ENCODE measurements at regions of chr3 and their contacts with region 1.

Region 1: DNA sequence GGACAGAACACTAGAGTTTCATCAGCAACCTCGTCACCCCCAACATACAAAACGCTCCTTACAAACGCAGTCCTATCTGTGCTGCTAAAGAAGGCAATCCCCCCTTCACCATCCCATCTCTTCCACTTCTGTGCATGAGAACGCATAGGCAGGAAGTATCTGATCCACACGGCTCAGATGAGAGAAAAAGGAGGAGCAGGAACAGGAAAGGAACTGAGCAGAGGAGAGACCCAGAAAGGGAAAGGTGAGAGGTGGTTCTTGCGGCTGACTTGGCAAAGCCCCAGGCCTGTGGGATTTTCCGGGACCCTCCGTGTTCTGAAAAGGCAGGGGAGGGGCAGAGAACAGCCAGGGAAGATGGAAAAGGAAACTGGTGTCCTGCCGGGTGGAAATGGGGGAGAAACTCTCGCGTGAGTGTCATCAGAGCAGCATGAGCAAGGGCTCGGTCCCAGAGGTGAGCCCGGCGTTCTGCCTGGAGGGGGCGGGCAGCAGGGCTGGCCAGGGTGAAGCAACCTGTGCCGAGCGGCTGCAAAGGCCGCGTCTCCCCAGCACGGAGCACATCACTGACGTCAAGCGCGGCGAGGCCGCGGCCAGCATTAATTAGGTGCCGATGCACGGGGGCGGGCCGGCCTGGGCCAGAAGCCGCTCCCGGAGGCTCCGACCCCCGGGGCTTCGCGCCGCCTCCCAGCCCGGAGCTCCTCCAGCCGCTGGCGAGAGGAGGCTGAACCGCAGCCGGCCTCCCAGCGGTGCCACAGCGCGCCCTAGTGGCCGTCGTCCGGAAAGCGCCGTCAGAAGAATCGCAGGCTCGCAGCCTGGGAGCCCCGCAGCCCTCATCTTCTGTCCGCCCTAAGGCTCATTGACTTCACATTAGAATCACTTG is 35.8 kb downstream of the CPN2 start:
- DNase-seq: peak; percentile 88
- H3K4me3 ChIP-seq: peak overlapping the region; percentile 0 to 57 (median 42)
- H3K27ac ChIP-seq: peak overlapping the region; percentile 49 to 69 (median 56)
- H3K4me1 ChIP-seq: peaks cover 4 to 28% (median 21%) of the 10 kb centered on the region in 4 donors
- H3K27me3 ChIP-seq: peaks cover 11% of the 10 kb centered on the region
- CTCF ChIP-seq: peak; percentile 93 to 98 (median 96)
- EP300 ChIP-seq: no peak
- POLR2A ChIP-seq: no peak

Region 2: DNA sequence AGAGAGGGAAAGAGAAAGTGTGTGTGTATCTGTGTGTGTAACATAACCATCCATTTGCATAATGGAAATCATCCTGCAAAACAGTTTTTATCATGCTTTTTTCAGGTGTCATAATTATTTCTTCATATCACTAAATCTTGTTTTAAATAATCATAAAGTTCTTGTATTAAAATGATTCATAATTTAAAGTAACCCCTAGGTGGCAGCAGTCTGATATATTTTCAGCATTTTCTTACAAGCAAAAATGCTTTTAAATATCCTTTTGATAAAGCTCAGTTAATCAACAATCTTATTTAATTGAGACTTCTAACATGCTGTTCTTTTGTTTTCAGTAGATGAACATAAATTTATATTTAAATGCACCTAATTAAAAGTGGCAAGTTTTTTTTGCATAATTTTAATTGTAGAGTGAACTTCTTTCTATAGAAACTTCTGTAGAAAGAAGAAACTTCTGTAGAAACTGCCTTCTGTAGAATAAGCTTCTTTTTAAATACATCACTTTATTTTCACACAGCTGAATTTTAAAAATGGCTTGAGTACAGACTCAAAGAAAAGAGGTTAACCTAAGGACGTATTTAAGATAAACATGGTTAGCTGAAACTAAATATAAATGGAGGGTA is 649.8 kb before region 1 on chr3:
- in situ Hi-C with region 1: loop called in 2 of 4 experiments (anchors 25 kb)
- intact Hi-C with region 1: no loop called
- DNase-seq: no peak
- H3K4me3 ChIP-seq: no peak overlapping the region
- H3K27ac ChIP-seq: no peak overlapping the region
- H3K4me1 ChIP-seq: no peaks in the 10 kb centered on the region
- H3K27me3 ChIP-seq: no peaks in the 10 kb centered on the region
- CTCF ChIP-seq: peak; percentile 46 to 53 (median 49)
- EP300 ChIP-seq: no peak
- POLR2A ChIP-seq: no peak

Region 3: GRCh38 chr3:193788189-193788991 is 526.9 kb before region 1 on chr3:
- in situ Hi-C with region 1: loop called in 3 of 4 experiments (anchors 5 to 10 kb)
- intact Hi-C with region 1: loop called (anchors 5 kb)
- DNase-seq: peak; percentile 54
- H3K4me3 ChIP-seq: no peak overlapping the region
- H3K27ac ChIP-seq: peak overlapping the region in 3 of 4 donors; percentile 18 to 44 (median 25)
- H3K4me1 ChIP-seq: peaks cover 0 to 23% (median 13%) of the 10 kb centered on the region in 4 donors
- H3K27me3 ChIP-seq: no peaks in the 10 kb centered on the region
- CTCF ChIP-seq: peak; percentile 69 to 86 (median 75)
- EP300 ChIP-seq: no peak
- POLR2A ChIP-seq: no peak

Region 4: GRCh38 chr3:194058189-194058571 is 257.1 kb before region 1 on chr3:
- in situ Hi-C with region 1: no loop called
- intact Hi-C with region 1: no loop called
- DNase-seq: peak; percentile 62
- H3K4me3 ChIP-seq: peak overlapping the region; percentile 7 to 39 (median 18)
- H3K27ac ChIP-seq: peak overlapping the region in 2 of 4 donors; percentile 20 to 41
- H3K4me1 ChIP-seq: peaks cover 0 to 11% (median 7%) of the 10 kb centered on the region in 4 donors
- H3K27me3 ChIP-seq: no peaks in the 10 kb centered on the region
- CTCF ChIP-seq: no peak
- EP300 ChIP-seq: no peak
- POLR2A ChIP-seq: no peak

Region 5: DNA sequence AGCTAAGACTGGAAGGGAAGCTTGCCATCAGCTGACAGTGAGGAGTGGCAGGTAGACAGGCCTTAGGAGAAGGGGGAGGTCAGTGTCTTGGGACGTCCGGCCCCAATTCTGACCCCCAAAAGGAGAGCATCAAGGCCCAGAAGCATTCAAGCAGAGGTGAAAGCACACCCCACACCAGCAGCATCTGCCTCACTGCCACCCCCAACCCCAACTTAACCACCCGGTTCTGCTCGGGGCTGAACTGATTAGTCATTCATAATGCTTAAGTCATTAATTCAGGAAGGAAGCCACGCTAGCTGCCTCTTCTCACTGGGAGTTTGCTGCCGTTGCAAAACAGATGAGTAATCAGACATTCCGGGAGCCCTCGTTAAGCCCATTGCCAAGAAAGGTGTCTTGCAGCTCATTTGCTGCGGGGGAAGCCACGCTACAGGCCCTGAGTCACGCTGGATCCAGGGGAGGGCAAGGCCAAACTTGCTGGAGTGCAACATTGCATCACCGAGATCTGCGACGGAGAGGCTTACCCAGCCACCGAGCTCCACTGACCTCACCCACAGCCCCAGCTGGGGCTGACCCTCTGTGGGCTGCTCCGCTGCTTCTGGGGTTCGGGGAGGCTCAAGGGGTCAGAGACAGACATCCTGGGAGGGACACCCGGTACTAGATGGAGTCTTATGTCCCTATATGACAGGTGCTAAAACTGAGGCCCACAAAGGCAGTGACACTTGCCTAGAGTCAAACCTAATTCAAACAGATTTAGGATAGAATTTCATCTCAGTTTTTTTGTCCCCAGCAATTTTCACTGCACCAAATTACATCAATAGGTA is 225.8 kb before region 1 on chr3:
- in situ Hi-C with region 1: no loop called
- intact Hi-C with region 1: loop called (anchors 10 kb)
- DNase-seq: peak; percentile 63
- H3K4me3 ChIP-seq: no peak overlapping the region
- H3K27ac ChIP-seq: peak overlapping the region; percentile 13 to 41 (median 36)
- H3K4me1 ChIP-seq: peaks cover 0 to 4% (median 2%) of the 10 kb centered on the region in 4 donors
- H3K27me3 ChIP-seq: no peaks in the 10 kb centered on the region
- CTCF ChIP-seq: no peak
- EP300 ChIP-seq: no peak
- POLR2A ChIP-seq: no peak

Region 6: GRCh38 chr3:194141415-194142155 is 173.7 kb before region 1 on chr3:
- in situ Hi-C with region 1: loop called in 1 of 4 experiments (anchors 25 kb)
- intact Hi-C with region 1: loop called (anchors 1 kb)
- DNase-seq: peak; percentile 91
- H3K4me3 ChIP-seq: peak overlapping the region in 3 of 4 donors; percentile 36 to 56 (median 42)
- H3K27ac ChIP-seq: peak overlapping the region; percentile 95 to 97 (median 96)
- H3K4me1 ChIP-seq: peaks cover 18 to 47% (median 40%) of the 10 kb centered on the region in 4 donors
- H3K27me3 ChIP-seq: no peaks in the 10 kb centered on the region
- CTCF ChIP-seq: no peak
- EP300 ChIP-seq: no peak
- POLR2A ChIP-seq: peak; percentile 40

Region 7: DNA sequence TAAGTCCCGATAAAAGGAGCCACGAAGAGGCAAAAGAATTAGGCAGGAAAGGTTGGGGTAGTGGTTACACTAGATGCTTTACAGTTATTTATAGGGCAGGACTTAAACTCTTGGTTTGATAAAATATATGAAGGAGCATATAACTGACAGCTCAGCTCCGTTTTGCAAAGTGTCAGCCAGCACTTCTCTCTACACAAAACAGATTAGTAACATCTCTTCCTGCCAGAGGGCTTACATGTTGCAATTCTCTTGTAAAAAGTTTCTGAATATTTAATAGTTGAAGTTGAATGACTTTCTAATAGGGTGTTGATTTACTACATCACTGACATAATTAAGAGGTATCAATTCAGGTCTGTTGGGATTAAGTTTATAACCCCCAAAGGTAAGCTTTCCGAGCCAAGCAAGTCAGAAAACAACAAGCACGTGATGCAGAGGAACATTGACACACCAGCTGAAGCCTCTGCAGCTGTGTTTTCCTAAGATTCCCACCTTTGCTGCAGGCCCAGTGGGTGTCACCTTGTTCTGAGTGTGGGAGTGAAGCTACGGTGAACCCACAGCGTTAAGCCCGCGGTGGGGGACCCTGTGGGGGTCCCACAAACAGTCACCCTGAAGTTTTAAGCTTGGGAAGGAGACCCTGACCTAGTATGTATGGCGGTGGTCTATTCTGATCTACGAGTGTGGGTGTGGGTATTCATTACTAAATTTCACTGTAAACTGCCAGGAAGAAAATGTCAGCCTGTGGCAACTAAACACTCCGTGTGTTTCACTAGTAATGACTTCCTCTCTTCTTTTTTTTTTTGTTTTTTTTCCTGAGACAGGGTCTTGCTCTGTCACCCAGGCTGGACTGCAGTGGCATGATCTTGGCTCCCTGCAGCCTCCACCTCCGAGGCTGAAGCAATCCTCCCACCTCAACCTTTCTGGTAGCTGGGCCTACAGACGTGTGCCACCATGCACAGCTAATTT is 193.4 kb after region 1 on chr3:
- in situ Hi-C with region 1: no loop called
- intact Hi-C with region 1: no loop called
- DNase-seq: no peak
- H3K4me3 ChIP-seq: no peak overlapping the region
- H3K27ac ChIP-seq: no peak overlapping the region
- H3K4me1 ChIP-seq: no peaks in the 10 kb centered on the region
- H3K27me3 ChIP-seq: no peaks in the 10 kb centered on the region
- CTCF ChIP-seq: no peak
- EP300 ChIP-seq: no peak
- POLR2A ChIP-seq: no peak

Measured in transverse colon (tissue), 4 donors.